Lower leg skin (tissue), 4 donors: ENCODE measurements at regions of chr18 and their contacts with region 1.

Region 1: DNA sequence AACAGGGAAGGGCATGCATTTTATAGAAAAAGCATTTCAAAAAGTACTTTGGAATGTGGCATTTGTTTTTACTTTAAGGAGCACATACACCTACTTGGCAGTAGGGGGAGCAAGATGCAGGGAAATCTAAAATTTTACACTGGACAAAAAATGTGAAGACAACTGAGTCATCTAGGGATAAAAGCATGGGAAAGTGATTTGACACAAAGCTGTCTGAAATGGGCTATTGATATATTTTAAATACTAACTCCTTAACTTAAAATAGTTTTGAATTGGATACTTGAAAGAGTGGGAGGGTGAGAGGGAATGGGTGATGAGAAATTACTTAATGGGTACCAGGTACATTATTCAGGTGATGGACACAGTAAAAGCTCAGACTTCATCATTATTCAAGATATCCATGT is 15.8 kb downstream of the TMEM200C start:
- DNase-seq: no peak
- H3K4me3 ChIP-seq: no peak overlapping the region
- CTCF ChIP-seq: no peak
- POLR2A ChIP-seq: no peak

Region 2: DNA sequence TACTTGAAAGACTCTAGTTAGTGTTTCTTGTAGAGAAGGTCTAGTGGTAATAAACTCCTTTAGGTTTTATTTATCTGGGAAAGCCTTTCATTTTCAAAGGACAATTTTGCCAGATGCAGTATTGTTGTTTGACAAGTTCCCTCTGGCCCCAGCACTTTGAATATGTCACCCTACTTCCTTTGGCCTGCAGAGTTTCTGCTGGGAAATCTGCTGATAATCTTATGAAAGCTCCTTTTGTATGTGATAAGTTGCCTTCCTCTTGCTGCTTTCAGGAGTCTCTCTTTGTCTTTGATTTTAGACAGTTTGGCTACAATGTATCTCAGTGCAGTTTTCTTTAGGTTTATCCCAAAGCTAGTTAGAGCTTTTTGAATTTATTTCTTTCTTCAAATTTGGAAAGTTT is 641.4 kb after region 1 on chr18:
- intact Hi-C with region 1: loop called (anchors 1 kb)
- DNase-seq: no peak
- H3K4me3 ChIP-seq: no peak overlapping the region
- CTCF ChIP-seq: no peak
- POLR2A ChIP-seq: no peak

Region 3: DNA sequence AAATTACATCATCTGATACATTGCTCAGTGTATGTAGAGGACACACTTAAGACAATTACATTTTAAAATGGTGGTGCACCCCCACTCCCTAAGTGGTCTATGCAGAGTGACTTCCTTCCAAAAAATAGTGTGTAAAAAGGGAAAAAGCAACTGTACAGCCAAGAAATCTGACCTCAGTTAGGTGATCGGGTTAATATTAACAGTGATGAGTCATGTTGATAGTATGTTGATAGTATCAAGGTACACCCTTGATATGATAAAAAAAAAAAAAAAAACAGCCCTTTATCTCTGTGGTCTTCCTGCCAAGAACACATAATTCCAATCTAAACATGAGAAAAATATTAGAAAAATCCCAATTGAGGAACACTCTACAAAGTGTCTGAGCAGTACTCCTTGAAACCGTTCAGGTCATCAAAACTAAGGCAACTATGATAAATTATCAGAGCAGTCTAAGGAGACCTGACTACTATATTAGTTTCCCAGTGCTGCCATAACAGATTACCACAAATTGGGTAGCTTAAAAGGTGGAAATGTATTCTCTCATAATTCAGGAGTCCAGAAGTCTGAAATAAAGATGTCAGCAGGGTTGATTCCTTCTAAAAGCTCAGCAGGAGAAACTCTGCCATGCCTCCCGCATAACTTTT is 1021.9 kb after region 1 on chr18:
- intact Hi-C with region 1: no loop called
- DNase-seq: no peak
- H3K4me3 ChIP-seq: no peak overlapping the region
- CTCF ChIP-seq: no peak
- POLR2A ChIP-seq: no peak